ENCODE measurements at regions of chr9 and their contacts with region 1.

Region 1: GRCh38 chr9:95317119-95317892 is at the start of gene FANCC:
- DNase-seq: peak; percentile 85
- H3K4me3 Mint-ChIP-seq: peak within 1 kb of the TSS; percentile 91
- H3K27ac Mint-ChIP-seq: peak within 1 kb of the TSS; percentile 93
- H3K4me1 Mint-ChIP-seq: peaks cover 18% of the 10 kb centered on the region
- H3K27me3 Mint-ChIP-seq: peaks cover 6% of the 10 kb centered on the region
- total RNA-seq, gene FANCC: 14.1 to 14.5 TPM

Region 2: DNA sequence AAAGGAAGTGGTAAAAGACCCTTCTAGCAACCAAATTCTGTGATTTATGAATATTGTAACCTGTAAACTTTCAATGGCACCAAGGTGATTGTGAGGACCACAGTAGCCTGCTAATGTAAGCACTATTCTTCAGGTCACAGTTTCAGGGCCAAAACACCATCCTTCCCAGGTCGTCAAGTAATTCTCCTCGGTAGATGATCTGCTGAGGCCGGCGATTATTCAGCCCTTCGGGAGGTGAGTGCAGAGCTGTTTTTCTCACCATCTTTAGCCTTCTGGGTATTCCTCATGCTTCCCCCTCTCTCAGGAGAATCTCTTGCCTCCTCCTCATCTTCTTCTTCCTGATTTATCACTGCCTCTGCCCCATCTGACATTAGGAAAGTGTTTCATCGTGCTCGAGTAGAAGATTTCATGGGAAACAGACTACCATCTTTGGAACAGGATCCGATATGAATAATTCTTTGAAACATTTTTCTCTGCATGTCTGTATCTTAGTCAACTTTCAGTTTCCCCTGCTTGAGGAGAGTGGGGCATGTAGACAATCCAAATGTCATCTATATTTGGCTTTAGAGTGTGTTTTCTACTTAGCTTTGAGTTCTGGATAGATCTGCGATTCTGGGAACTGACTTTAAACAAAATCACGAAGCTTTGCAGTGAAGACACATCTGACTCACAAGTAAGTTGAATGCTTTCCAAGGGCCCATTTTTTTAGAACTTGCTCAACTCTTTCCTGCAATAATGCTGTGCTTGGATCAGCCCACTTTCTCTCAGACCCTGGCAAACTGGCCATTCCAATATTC is 416.9 kb before region 1 on chr9:
- CTCF ChIA-PET with region 1: no interaction called
- intact Hi-C with region 1: no loop called
- DNase-seq: no peak
- H3K4me3 Mint-ChIP-seq: no peak overlapping the region
- H3K27ac Mint-ChIP-seq: peak overlapping the region; percentile 57
- H3K4me1 Mint-ChIP-seq: peaks cover 7% of the 10 kb centered on the region
- H3K27me3 Mint-ChIP-seq: no peaks in the 10 kb centered on the region

Region 3: DNA sequence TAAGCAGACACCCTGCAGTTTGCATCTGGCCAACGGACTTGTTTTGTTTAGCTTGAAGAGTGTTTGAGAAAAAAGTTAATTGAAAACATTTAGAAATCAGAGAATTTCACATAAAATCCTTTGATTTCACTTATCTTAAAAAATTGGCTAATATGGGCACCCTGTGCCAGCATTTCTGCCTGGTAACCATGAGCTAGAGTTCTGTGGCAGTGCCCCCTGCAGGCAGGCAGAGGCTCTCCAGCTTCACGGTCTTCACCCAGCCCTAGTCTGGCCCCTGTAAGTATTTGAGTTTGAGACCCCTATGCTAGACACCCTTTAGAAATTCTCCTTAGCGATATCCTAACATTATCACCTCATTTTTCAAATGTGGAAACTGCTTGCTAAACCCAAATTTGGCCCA is 19.0 kb after region 1 on chr9:
- CTCF ChIA-PET with region 1: interaction called, 5 read pairs
- intact Hi-C with region 1: loop called (anchors 2 kb)
- DNase-seq: peak; percentile 38
- H3K4me3 Mint-ChIP-seq: no peak overlapping the region
- H3K27ac Mint-ChIP-seq: no peak overlapping the region
- H3K4me1 Mint-ChIP-seq: no peaks in the 10 kb centered on the region
- H3K27me3 Mint-ChIP-seq: peaks cover 5% of the 10 kb centered on the region

Region 4: GRCh38 chr9:95425910-95426551 is 108.7 kb after region 1 on chr9:
- CTCF ChIA-PET with region 1: no interaction called
- intact Hi-C with region 1: loop called (anchors 1 kb)
- DNase-seq: peak; percentile 8
- H3K4me3 Mint-ChIP-seq: peak overlapping the region; percentile 77
- H3K27ac Mint-ChIP-seq: no peak overlapping the region
- H3K4me1 Mint-ChIP-seq: peaks cover 10% of the 10 kb centered on the region
- H3K27me3 Mint-ChIP-seq: no peaks in the 10 kb centered on the region

Measured in activated naive CD4-positive, alpha-beta T cell treated with anti-CD3 and anti-CD28 coated beads for 36 hours (primary cell).